Left ventricle myocardium inferior (tissue), 1 donor: ENCODE measurements at regions of chr9 and their contacts with region 1.

Region 1: GRCh38 chr9:70352802-70353201 is 61.7 kb downstream of the KLF9 start:
- DNase-seq: no peak
- H3K4me3 ChIP-seq: no peak overlapping the region
- H3K27ac ChIP-seq: peak overlapping the region; percentile 29
- H3K4me1 ChIP-seq: peaks cover 26% of the 10 kb centered on the region
- H3K27me3 ChIP-seq: no peaks in the 10 kb centered on the region
- CTCF ChIP-seq: peak; percentile 84

Region 2: DNA sequence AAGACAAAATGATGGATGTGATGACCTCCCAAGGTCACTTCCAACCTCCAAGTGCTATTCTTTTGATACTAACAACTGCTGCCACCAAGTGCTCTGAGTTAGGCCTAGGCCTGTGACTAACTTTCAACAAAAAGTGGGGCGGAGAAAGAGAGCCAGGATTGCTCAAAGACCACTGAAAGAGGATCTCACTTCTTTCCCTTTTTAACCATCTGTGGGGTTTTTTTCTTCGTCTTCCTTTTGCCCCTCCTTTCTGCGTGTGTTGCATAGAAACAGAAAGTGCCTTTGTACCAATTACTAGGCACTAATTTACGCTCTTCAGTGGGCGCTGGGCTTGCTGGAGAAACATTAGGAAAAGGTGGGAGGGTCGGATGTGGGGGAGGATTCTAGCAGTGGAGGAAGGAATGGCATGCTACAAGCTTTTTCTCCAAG is 53.6 kb after region 1 on chr9:
- intact Hi-C with region 1: loop called (anchors 10 kb)
- DNase-seq: no peak
- H3K4me3 ChIP-seq: peak overlapping the region; percentile 88
- H3K27ac ChIP-seq: peak overlapping the region; percentile 70
- H3K4me1 ChIP-seq: peaks cover 99% of the 10 kb centered on the region
- H3K27me3 ChIP-seq: no peaks in the 10 kb centered on the region
- CTCF ChIP-seq: no peak

Region 3: GRCh38 chr9:70602321-70603019 is 249.7 kb after region 1 on chr9:
- intact Hi-C with region 1: loop called (anchors 5 kb)
- DNase-seq: no peak
- H3K4me3 ChIP-seq: peak overlapping the region; percentile 48
- H3K27ac ChIP-seq: peak overlapping the region; percentile 95
- H3K4me1 ChIP-seq: peaks cover 37% of the 10 kb centered on the region
- H3K27me3 ChIP-seq: no peaks in the 10 kb centered on the region
- CTCF ChIP-seq: peak; percentile 88